ENCODE measurements at regions of chr12 and their contacts with region 1.

Region 1: DNA sequence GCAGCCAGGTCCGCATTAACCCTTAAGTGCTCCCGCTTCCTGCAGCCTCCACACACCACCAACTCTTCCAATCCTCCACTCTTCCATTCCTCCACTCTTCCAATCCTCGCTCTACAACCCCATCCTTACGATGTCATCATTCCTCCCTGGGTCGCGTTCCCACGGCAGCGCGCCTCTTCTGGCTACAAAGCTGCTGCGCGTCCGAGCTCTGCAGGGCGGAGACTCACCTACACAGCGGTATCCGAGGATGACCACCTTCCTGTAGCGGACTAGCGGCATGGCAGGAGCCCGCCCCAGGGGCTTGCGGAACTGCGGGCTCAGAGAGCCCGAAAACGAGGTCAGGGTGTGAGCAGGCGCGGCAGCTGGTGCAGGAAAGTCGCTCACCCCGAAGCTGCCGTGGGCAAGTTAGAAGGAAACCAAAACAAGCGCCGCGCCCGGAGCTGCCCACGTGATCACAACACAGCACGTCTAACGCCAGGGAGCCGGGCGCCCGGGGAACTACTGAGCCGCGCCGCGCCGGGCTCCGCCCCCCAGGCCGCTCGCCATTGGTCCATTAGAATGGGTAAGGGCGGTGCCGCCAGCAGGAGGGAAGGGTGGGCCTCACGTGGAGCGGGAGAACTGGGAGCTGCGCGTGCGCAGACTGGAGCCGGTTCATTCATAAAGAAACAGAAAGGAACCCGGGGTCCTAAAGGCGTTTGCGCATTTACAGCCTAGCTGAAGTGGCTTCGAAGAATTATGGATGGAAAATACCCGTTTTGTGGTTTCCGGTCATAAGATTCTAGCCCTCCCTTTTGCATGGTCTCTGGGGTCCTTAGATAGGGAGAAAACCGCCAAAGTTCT is at the start of gene RHEBL1:
- DNase-seq: peak; percentile 98
- H3K4me3 Mint-ChIP-seq: peak within 1 kb of the TSS; percentile 83
- H3K27ac Mint-ChIP-seq: peak within 1 kb of the TSS; percentile 73
- H3K4me1 Mint-ChIP-seq: peaks cover 18% of the 10 kb centered on the region
- H3K27me3 Mint-ChIP-seq: no peaks in the 10 kb centered on the region
- CTCF ChIP-seq: no peak
- total RNA-seq, gene RHEBL1: 0.35 and 0.93 TPM in 2 replicates

Region 2: GRCh38 chr12:49098035-49098451 is 28.3 kb after region 1 on chr12:
- CTCF ChIA-PET with region 1: interaction called, 14 read pairs
- POLR2A ChIA-PET with region 1: interaction called, 4 read pairs
- intact Hi-C with region 1: loop called (anchors 2 kb)
- DNase-seq: peak; percentile 61
- H3K4me3 Mint-ChIP-seq: no peak overlapping the region
- H3K27ac Mint-ChIP-seq: no peak overlapping the region
- H3K4me1 Mint-ChIP-seq: peaks cover 5% of the 10 kb centered on the region
- H3K27me3 Mint-ChIP-seq: no peaks in the 10 kb centered on the region
- CTCF ChIP-seq: peak; percentile 51

Region 3: DNA sequence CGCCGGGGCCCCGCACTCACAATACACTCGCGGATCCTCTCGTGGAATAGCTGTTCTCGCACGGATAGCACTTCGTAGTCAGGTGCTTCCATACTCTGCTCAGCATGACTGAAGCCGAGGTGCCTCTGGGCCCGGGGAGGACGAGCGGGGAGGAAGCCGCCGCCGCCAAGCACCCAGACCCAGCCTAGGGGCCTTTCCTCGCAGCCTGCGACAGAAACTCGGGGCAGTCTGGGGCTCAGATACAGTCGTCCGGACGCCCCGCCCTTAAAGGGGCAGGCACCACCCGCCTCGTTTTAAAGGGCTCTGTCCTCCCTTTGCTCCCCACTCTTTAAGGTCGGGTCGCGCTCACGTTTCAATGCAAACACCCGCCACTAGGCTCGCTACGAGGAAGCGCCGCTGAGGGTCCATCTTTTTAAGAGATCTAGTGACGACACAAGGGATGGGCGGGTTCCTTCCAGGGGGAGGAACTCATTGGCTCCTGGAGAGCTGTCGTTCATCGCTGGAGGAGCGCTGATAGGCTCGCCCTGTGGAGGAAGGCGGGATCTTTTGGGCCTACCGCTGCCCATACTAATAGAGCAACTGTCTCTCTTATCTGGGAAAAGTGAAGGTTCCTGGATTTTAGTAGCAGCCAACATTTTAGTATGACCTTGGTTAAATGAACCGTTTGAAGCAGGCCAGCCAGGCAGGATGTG is 40.9 kb after region 1 on chr12 and contains the start of gene LMBR1L:
- CTCF ChIA-PET with region 1: interaction called, 13 read pairs
- POLR2A ChIA-PET with region 1: interaction called, 23 read pairs
- intact Hi-C with region 1: no loop called
- DNase-seq: peak; percentile 99
- H3K4me3 Mint-ChIP-seq: peak within 1 kb of the TSS; percentile 86
- H3K27ac Mint-ChIP-seq: peak within 1 kb of the TSS; percentile 97
- H3K4me1 Mint-ChIP-seq: peaks cover 18% of the 10 kb centered on the region
- H3K27me3 Mint-ChIP-seq: no peaks in the 10 kb centered on the region
- CTCF ChIP-seq: peak; percentile 14
- total RNA-seq, gene LMBR1L: 27.8 and 35.7 TPM in 2 replicates

Region 4: GRCh38 chr12:49121047-49121696 is 51.4 kb after region 1 on chr12:
- CTCF ChIA-PET with region 1: interaction called, 48 read pairs
- POLR2A ChIA-PET with region 1: interaction called, 10 read pairs
- intact Hi-C with region 1: loop called (anchors 1 kb)
- DNase-seq: peak; percentile 78
- H3K4me3 Mint-ChIP-seq: no peak overlapping the region
- H3K27ac Mint-ChIP-seq: no peak overlapping the region
- H3K4me1 Mint-ChIP-seq: no peaks in the 10 kb centered on the region
- H3K27me3 Mint-ChIP-seq: no peaks in the 10 kb centered on the region
- CTCF ChIP-seq: peak; percentile 57

Region 5: GRCh38 chr12:49188914-49189367 is 119.2 kb after region 1 on chr12 and contains the start of gene TUBA1A:
- CTCF ChIA-PET with region 1: interaction called, 5 read pairs
- POLR2A ChIA-PET with region 1: interaction called, 11 read pairs
- intact Hi-C with region 1: no loop called
- DNase-seq: peak; percentile 68
- H3K4me3 Mint-ChIP-seq: peak within 1 kb of the TSS; percentile 91
- H3K27ac Mint-ChIP-seq: peak within 1 kb of the TSS; percentile 89
- H3K4me1 Mint-ChIP-seq: peaks cover 12% of the 10 kb centered on the region
- H3K27me3 Mint-ChIP-seq: peaks cover 22% of the 10 kb centered on the region
- CTCF ChIP-seq: no peak
- total RNA-seq, gene TUBA1A: 9.8 and 10.4 TPM in 2 replicates

Region 6: DNA sequence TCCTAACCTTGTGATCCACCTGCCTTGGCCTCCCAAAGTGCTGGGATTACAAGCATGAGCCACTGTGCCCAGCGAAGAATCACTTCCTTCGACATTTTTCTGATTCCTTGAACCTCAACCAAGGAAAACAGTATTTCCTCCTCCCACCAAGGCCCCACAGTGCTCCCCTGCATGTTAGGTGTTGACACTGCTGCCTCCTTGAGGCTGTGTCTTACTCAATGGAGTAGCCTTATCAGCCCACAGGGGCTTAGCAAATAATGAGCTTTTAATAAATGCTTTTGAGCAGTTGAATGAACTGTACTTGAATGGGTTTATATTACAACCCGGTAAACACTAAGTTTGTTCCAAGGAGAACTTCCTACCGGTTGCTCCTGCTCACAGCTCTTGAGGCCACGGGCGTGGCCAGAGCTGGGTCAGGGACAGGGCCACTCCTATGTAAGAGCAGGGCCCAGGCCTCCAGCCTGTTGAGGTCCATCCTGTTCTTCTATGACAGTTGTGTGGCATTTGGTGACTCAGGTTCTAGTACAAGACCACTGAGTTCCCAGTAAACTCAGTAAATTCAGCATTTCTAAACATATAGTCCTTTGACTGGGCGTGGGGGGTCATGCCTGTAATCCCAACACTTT is 155.9 kb after region 1 on chr12:
- CTCF ChIA-PET with region 1: no interaction called
- POLR2A ChIA-PET with region 1: no interaction called
- intact Hi-C with region 1: no loop called
- DNase-seq: peak; percentile 31
- H3K4me3 Mint-ChIP-seq: no peak overlapping the region
- H3K27ac Mint-ChIP-seq: no peak overlapping the region
- H3K4me1 Mint-ChIP-seq: peaks cover 12% of the 10 kb centered on the region
- H3K27me3 Mint-ChIP-seq: no peaks in the 10 kb centered on the region
- CTCF ChIP-seq: no peak

Measured in MCF 10A (cell line).